ENCODE measurements at regions of chr7 and their contacts with region 1.

Region 1: DNA sequence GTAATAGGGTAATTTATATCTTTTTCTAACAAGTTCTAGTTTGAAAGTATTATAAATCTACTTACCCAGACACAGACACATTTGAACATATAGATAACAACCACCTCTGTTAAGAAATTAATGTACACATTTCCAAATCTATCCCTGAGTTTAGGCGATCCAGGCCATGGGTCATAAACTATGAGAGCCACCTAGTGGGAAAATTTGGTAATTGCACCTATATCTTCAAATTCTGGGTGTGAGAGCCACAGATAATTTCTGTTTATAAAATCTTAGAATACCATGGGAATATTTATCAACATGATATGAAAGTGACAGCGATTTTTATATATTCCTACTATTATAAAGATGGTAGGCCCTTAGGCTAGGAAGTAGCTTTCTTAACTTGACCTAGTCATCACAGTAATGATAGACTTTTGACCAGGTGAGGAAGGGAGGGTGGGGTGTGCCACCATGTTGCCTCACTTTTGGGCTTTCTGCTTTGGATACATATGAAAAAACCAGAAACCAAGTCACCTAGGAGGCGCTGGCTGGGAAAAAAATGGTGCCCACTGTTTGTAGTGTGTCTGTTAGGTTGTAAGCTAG is 8.0 kb upstream of the EPHA1 start:
- DNase-seq: no peak
- ATAC-seq: peak; percentile 57
- H3K4me3 Mint-ChIP-seq: no peak overlapping the region
- H3K27ac Mint-ChIP-seq: no peak overlapping the region
- H3K4me1 Mint-ChIP-seq: no peaks in the 10 kb centered on the region
- H3K27me3 Mint-ChIP-seq: no peaks in the 10 kb centered on the region

Region 2: GRCh38 chr7:143214789-143215679 is 201.6 kb before region 1 on chr7:
- CTCF ChIA-PET with region 1: interaction called, 12 read pairs
- POLR2A ChIA-PET with region 1: no interaction called
- DNase-seq: peak; percentile 79
- ATAC-seq: peak; percentile 85
- H3K4me3 Mint-ChIP-seq: no peak overlapping the region
- H3K27ac Mint-ChIP-seq: no peak overlapping the region
- H3K4me1 Mint-ChIP-seq: no peaks in the 10 kb centered on the region
- H3K27me3 Mint-ChIP-seq: peaks cover 6% of the 10 kb centered on the region

Region 3: DNA sequence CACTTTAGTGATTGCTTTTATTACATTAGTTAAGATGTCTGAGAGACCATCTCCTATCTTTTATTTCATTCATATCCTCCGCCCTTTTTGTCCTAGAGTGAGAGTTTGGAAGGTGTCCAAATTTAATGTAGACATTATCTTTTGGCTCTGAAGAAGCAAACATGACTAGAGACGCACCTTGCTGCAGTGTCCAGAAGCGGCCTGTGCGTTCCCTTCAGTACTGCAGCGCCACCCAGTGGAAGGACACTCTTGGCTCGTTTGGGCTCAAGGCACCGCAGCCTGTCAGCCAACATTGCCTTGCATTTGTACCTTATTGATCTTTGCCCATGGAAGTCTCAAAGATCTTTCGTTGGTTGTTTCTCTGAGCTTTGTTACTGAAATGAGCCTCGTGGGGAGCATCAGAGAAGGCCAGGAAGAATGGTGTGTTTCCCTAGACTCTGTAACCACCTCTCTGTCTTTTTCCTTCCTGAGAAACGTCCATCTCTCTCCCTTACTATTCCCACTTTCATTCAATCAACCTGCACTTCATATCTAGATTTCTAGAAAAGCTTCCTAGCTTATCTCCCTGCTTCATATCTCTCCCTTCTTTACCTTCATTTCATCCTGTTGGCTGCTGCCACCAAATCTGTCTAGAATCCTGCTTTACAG is 111.1 kb before region 1 on chr7:
- CTCF ChIA-PET with region 1: interaction called, 16 read pairs
- POLR2A ChIA-PET with region 1: interaction called, 3 read pairs
- DNase-seq: peak; percentile 72
- ATAC-seq: peak; percentile 57
- H3K4me3 Mint-ChIP-seq: no peak overlapping the region
- H3K27ac Mint-ChIP-seq: peak overlapping the region; percentile 9
- H3K4me1 Mint-ChIP-seq: peaks cover 51% of the 10 kb centered on the region
- H3K27me3 Mint-ChIP-seq: no peaks in the 10 kb centered on the region

Region 4: GRCh38 chr7:143380255-143380645 is 36.4 kb before region 1 on chr7:
- CTCF ChIA-PET with region 1: interaction called, 39 read pairs
- POLR2A ChIA-PET with region 1: interaction called, 4 read pairs
- DNase-seq: peak; percentile 91
- ATAC-seq: peak; percentile 53
- H3K4me3 Mint-ChIP-seq: peak overlapping the region; percentile 80
- H3K27ac Mint-ChIP-seq: peak overlapping the region; percentile 91
- H3K4me1 Mint-ChIP-seq: peaks cover 38% of the 10 kb centered on the region
- H3K27me3 Mint-ChIP-seq: no peaks in the 10 kb centered on the region

Region 5: DNA sequence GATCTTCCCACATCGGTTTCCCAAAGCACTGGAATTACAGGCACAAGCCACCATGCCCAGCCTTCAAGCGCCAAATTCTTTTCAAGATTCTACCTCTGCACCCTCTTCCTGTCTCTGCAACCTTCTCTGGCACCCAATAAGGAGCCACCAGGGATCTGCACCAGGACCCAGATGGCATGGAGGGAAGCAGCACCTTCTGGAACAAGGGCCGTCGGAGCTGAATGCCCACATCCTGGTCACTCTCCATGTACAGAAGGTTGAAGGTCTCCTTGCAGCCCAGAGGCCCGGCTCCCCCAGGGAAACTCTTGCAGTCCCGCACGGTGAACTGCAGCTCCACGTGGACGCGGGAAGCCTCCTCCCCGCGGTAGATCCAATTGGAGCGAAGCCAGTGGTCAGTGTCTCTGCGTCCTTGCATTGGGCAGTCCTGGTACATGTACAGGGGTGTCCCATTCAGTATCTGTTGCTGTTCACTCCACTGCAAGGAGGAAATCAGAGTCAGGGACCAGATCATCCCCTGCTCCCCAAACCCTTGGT is 15.5 kb before region 1 on chr7:
- CTCF ChIA-PET with region 1: interaction called, 45 read pairs
- POLR2A ChIA-PET with region 1: interaction called, 4 read pairs
- DNase-seq: no peak
- ATAC-seq: no peak
- H3K4me3 Mint-ChIP-seq: no peak overlapping the region
- H3K27ac Mint-ChIP-seq: no peak overlapping the region
- H3K4me1 Mint-ChIP-seq: peaks cover 12% of the 10 kb centered on the region
- H3K27me3 Mint-ChIP-seq: no peaks in the 10 kb centered on the region

Region 6: DNA sequence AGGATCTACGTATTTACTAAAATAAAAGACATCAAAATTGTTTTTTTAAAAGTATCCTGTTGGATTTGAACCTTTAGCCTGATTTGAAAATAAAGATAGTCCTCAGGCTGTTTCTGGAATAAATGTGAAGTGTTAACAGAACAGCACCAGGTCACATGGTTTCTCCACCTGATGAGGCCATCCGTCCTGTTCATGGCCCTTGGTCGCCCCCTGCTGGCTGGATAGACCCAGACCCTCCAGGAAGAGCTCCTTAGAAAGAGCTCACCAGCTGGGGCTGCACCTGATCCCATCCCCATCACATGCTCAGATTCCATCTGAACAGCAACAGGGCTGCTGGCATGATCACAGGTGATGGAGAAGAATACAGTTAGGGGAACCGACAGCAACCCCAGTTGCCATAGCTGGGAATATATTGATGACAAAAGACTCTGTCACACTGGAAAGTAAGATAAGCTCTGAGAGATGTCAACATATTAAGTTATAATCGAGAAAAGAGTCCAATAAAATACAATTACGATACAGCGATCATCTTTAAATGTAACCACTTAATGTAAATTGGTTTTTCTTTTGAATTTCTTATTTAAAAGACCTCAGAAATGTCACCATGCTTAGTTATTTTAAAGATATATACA is 711.2 kb after region 1 on chr7:
- CTCF ChIA-PET with region 1: no interaction called
- POLR2A ChIA-PET with region 1: no interaction called
- DNase-seq: peak; percentile 92
- ATAC-seq: peak; percentile 99
- H3K4me3 Mint-ChIP-seq: no peak overlapping the region
- H3K27ac Mint-ChIP-seq: no peak overlapping the region
- H3K4me1 Mint-ChIP-seq: no peaks in the 10 kb centered on the region
- H3K27me3 Mint-ChIP-seq: no peaks in the 10 kb centered on the region